MCF 10A (cell line): ENCODE measurements at regions of chr17 and their contacts with region 1.

Region 1: DNA sequence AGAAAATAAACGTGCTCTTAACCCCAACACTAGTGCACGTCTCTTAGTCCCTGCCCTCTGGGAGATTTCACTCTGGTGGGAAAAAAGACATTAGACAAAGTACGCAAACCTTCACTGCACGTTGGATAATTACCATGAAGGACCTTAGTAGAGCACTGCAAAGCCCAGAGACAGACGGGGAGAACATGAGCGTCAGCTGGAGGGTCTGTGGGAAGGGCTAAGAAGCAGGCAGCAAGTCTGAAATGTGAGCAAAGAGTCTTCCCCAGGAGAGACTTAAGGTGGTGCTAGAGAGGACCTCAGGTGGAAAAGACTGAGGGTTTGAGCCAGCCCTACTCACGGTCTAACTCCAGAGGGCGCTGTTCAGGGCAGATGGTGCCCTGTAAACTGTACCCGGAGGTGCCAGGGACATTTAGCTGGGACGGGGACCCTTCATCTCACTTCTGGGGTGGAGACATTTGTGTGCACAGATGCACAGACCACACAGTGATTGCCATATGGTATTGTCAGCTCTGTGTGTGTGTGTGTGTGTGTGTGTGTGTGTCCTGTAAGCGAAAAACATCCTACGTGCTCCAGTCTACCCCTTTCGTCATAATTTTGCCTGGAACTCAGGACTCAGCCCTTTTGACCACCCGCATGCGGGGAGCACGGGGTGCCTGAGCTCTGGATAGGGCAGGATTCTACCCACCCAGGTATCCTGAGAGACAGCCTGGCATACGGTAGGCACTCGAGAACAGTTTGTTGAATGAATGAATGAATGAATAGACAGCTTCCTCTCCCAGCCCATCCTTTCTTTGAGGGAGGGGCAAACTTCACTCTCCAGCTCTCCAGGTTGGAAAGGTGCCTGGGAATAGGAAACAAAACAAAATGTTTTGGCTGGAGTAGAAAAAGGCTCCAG is 10.1 kb upstream of the STAC2 start:
- DNase-seq: peak; percentile 73
- H3K4me3 Mint-ChIP-seq: no peak overlapping the region
- H3K27ac Mint-ChIP-seq: no peak overlapping the region
- H3K4me1 Mint-ChIP-seq: peaks cover 33% of the 10 kb centered on the region
- H3K27me3 Mint-ChIP-seq: no peaks in the 10 kb centered on the region
- CTCF ChIP-seq: peak; percentile 78

Region 2: GRCh38 chr17:38789185-38789584 is 446.6 kb before region 1 on chr17:
- CTCF ChIA-PET with region 1: no interaction called
- POLR2A ChIA-PET with region 1: no interaction called
- intact Hi-C with region 1: no loop called
- DNase-seq: no peak
- H3K4me3 Mint-ChIP-seq: no peak overlapping the region
- H3K27ac Mint-ChIP-seq: no peak overlapping the region
- H3K4me1 Mint-ChIP-seq: no peaks in the 10 kb centered on the region
- H3K27me3 Mint-ChIP-seq: no peaks in the 10 kb centered on the region
- CTCF ChIP-seq: no peak

Region 3: GRCh38 chr17:39057701-39058206 is 178.0 kb before region 1 on chr17:
- CTCF ChIA-PET with region 1: no interaction called
- POLR2A ChIA-PET with region 1: no interaction called
- intact Hi-C with region 1: no loop called
- DNase-seq: no peak
- H3K4me3 Mint-ChIP-seq: peak overlapping the region; percentile 70
- H3K27ac Mint-ChIP-seq: no peak overlapping the region
- H3K4me1 Mint-ChIP-seq: peaks cover 5% of the 10 kb centered on the region
- H3K27me3 Mint-ChIP-seq: peaks cover 15% of the 10 kb centered on the region
- CTCF ChIP-seq: no peak

Region 4: DNA sequence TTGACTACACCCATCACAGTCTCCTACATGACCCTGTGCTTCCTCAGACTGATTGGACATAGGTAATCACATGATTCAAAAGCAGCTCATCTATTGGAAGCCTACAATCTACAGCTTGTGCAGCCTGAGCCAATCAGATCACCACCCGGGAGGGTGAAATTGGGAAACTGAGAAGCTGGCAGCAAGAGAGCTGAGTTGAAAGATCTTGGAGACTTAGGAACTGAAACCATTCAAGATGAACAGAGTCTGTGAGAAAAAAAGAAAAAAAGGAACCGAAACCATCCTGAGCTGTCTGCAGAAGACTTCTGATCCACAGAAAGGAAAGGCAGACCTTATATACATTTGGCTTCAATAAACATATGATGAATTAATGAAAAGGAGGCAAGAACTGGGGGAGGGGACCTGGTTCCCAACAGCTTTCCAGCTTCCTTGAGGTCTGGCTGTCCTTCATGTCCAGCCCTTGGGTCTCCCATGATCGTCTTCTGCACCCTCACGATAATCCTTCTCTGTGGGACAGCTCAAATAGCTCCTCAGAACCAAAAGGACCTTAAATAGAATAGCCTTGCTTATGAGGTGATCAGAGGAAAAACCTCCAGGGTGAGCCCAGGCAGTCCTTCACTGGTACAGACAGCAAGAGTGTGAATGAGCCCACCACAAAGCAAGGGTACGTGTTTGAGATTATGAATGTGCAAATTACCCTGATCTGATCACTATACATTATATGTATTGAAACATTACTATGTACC is 117.0 kb before region 1 on chr17:
- CTCF ChIA-PET with region 1: no interaction called
- POLR2A ChIA-PET with region 1: no interaction called
- intact Hi-C with region 1: no loop called
- DNase-seq: no peak
- H3K4me3 Mint-ChIP-seq: no peak overlapping the region
- H3K27ac Mint-ChIP-seq: no peak overlapping the region
- H3K4me1 Mint-ChIP-seq: no peaks in the 10 kb centered on the region
- H3K27me3 Mint-ChIP-seq: peaks cover 26% of the 10 kb centered on the region
- CTCF ChIP-seq: no peak

Region 5: DNA sequence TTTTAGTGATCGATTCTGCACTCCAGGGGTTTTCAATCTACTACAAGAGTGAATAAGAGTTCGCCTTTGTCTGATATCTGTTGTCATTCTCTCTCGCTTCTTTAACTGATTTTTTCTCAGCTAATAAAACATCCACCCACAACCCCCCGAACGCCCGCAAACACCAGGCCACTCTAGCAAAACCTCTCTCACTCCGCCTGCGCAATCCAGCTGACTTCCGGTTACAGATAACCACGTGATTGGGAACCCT is 36.1 kb before region 1 on chr17:
- CTCF ChIA-PET with region 1: interaction called, 485 read pairs
- POLR2A ChIA-PET with region 1: interaction called, 10 read pairs
- intact Hi-C with region 1: no loop called
- DNase-seq: peak; percentile 95
- H3K4me3 Mint-ChIP-seq: peak overlapping the region; percentile 90
- H3K27ac Mint-ChIP-seq: peak overlapping the region; percentile 100
- H3K4me1 Mint-ChIP-seq: peaks cover 22% of the 10 kb centered on the region
- H3K27me3 Mint-ChIP-seq: no peaks in the 10 kb centered on the region
- CTCF ChIP-seq: no peak

Region 6: DNA sequence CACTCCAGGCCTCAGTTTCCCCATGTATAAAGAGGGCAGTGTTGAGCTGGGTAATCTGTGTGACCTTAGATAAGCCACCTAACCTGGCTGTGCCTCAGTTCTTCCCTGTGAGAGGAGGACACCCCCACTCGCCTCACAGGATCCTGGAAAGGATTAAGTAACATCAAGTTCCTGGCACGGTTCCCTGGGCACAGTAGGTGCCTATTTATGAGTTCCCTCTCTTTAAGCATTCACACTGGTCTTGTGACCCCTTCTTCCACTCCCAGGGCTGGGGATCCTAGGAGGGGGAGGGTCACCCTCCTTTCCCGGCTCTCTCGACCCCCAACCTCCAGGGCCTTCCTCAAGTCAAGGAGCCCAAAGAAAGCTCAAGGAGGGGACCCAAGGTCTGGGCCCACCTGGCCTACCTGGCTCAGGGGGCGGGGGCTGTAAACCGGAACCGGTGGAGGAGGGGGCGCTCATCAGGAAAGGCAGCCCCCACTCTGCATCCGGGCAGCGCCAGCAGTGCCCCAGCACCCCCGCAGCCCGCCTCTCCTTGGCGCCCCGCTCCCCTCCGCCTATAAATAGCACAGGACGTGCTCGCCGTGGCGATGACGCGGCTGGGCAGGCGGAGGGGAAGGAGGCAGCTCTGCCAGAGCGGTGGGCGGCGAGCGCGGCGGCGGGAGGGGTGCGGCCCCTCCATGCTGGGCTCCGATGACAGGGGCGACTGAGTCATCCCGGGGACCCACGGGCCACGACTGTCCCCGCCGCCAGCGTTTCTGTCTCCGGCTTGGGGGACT is 26.3 kb before region 1 on chr17:
- CTCF ChIA-PET with region 1: interaction called, 485 read pairs
- POLR2A ChIA-PET with region 1: interaction called, 28 read pairs
- intact Hi-C with region 1: no loop called
- DNase-seq: peak; percentile 94
- H3K4me3 Mint-ChIP-seq: peak overlapping the region; percentile 54
- H3K27ac Mint-ChIP-seq: peak overlapping the region; percentile 83
- H3K4me1 Mint-ChIP-seq: peaks cover 56% of the 10 kb centered on the region
- H3K27me3 Mint-ChIP-seq: no peaks in the 10 kb centered on the region
- CTCF ChIP-seq: no peak